Left cardiac atrium (tissue), 4 donors: ENCODE measurements at regions of chr10 and their contacts with region 1.

Region 1: GRCh38 chr10:72048450-72049124 is 39.8 kb downstream of the SPOCK2 start:
- DNase-seq: peak; percentile 91
- ATAC-seq: peak; percentile 85 to 87

Region 2: GRCh38 chr10:71486484-71487114 is 562.0 kb before region 1 on chr10:
- intact Hi-C with region 1: no loop called
- DNase-seq: peak; percentile 51
- ATAC-seq: peak; percentile 50 to 52

Region 3: GRCh38 chr10:71795248-71795647 is 253.3 kb before region 1 on chr10:
- intact Hi-C with region 1: no loop called
- DNase-seq: no peak
- ATAC-seq: peak in 1 of 2 donors; percentile 53

Region 4: DNA sequence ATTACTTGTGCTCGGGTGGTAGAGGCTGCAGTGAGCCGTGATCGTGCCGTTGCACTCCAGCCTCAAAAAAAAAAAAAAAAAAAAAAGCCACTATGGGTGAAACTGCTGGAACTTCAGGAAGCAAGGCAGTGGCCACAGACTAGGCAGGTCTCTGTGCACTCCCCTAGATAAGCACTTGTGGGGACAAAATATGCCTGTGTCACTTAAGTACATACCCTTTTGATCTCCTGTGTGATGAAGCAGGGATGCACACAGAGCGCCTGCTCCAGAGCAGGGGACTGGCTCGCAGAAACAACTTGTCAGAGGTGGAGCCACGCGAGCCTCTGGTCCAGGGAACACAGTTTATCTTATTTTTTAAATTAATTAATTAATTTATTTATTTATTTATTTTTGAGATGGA is 154.7 kb before region 1 on chr10:
- intact Hi-C with region 1: loop called in 1 of 2 experiments (anchors 2 kb)
- DNase-seq: no peak
- ATAC-seq: no peak

Region 5: DNA sequence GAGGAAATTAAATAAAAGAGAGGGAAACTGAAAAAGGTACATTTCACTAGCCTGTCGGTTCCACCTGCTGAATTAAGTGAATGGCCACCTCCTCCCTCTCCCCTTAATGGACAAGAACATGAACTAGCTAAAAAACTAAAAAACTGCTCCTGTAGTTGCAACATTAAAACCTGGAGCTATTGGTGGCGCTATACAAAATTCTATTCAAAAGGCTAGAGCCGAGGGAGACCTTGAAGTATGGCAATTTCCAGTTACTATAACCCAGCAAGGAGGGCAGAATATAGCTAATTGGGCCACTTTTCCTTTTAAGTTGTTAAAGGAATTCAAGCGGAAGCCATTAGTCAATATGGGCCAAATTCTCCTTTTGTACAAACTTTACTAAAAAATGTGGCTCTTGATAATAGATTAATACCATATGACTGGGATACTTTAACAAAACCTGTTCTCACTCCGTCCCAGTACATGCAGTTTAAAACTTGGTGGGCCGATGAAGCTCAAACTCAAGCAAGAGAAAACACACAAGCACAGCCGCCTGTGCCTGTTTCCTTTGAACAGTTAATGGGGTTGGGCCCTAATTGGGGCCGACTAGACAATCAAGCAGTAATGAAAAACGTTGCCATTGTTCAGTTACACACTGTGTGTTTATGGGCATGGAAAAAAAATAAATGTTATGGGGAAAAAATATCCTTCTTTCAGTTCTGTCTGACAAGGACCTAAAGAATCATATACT is 90.9 kb before region 1 on chr10:
- intact Hi-C with region 1: loop called (anchors 1 to 5 kb)
- DNase-seq: no peak
- ATAC-seq: no peak

Region 6: GRCh38 chr10:72088889-72089575 is 40.4 kb after region 1 on chr10:
- intact Hi-C with region 1: no loop called
- DNase-seq: peak; percentile 43
- ATAC-seq: peak; percentile 23 to 32

Region 7: DNA sequence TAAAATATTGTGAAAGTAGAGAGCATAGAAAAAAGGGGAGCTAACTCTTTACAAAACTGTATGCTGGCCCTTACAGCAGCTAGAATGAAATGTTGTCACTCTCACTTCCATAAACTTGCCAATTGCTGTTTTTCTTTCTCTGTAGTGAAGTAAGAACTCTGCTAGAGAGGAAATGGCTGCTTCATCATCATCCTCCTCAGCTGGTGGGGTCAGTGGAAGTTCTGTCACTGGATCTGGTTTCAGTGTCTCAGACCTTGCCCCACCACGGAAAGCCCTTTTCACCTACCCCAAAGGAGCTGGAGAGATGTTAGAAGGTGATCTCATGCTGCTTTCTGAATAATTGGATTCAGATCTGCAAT is 175.1 kb after region 1 on chr10:
- intact Hi-C with region 1: loop called in 1 of 2 experiments (anchors 2 kb)
- DNase-seq: no peak
- ATAC-seq: peak in 1 of 2 donors; percentile 34

Region 8: GRCh38 chr10:73644015-73644743 is 1595.6 kb after region 1 on chr10:
- intact Hi-C with region 1: no loop called
- DNase-seq: peak; percentile 58
- ATAC-seq: peak; percentile 16 to 28